Activated naive CD4-positive, alpha-beta T cell treated with anti-CD3 and anti-CD28 coated beads for 36 hours (primary cell): ENCODE measurements at regions of chr4 and their contacts with region 1.

Region 1: GRCh38 chr4:67545199-67546003 is at the start of gene CENPC:
- DNase-seq: peak; percentile 97
- H3K4me3 Mint-ChIP-seq: peak within 1 kb of the TSS; percentile 96
- H3K27ac Mint-ChIP-seq: peak within 1 kb of the TSS; percentile 99
- H3K4me1 Mint-ChIP-seq: peaks cover 38% of the 10 kb centered on the region
- H3K27me3 Mint-ChIP-seq: no peaks in the 10 kb centered on the region
- total RNA-seq, gene CENPC: 46.0 to 51.7 TPM

Region 2: GRCh38 chr4:67393699-67394281 is 151.6 kb before region 1 on chr4:
- CTCF ChIA-PET with region 1: no interaction called
- intact Hi-C with region 1: no loop called
- DNase-seq: peak; percentile 21
- H3K4me3 Mint-ChIP-seq: no peak overlapping the region
- H3K27ac Mint-ChIP-seq: no peak overlapping the region
- H3K4me1 Mint-ChIP-seq: no peaks in the 10 kb centered on the region
- H3K27me3 Mint-ChIP-seq: peaks cover 5% of the 10 kb centered on the region

Region 3: DNA sequence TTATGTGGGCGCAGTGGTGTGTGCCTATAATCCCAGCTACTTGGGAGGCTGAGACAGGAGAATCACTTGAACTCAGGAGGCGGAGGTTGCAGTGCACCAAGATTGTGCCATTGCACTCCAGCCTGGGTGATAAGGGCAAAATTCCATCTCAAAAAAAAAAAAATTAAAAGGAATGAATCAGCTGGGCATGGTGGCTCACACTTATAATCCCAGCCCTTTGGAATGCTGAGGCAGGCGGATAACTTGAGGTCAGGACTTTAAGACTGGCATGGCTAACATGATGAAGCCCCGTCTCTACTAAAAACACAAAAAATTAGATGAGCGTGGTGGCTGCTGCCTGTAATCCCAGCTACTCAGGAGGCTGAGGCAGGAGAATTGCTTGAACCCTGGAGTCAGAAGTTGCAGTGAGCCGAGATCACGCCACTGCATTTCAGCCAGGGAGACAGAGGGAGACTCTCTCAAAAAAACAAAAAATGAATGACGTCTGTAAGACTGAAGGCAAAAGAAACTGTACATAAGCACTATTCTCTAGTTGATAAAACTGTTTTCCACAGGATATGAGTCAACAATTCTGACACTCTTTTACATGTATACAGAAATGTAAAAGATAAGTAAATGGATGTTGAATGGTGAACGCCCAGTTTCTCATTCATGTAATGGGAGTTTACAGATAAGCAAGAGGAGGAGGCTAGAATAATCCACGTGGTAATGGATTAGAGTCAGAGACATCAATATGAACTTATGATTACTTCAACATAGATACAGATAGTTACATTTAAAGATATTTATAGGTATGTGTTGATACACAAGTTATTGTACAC is 22.3 kb before region 1 on chr4:
- CTCF ChIA-PET with region 1: interaction called, 4 read pairs
- intact Hi-C with region 1: loop called (anchors 1 kb)
- DNase-seq: no peak
- H3K4me3 Mint-ChIP-seq: peak overlapping the region; percentile 10
- H3K27ac Mint-ChIP-seq: peak overlapping the region; percentile 86
- H3K4me1 Mint-ChIP-seq: peaks cover 70% of the 10 kb centered on the region
- H3K27me3 Mint-ChIP-seq: no peaks in the 10 kb centered on the region

Region 4: DNA sequence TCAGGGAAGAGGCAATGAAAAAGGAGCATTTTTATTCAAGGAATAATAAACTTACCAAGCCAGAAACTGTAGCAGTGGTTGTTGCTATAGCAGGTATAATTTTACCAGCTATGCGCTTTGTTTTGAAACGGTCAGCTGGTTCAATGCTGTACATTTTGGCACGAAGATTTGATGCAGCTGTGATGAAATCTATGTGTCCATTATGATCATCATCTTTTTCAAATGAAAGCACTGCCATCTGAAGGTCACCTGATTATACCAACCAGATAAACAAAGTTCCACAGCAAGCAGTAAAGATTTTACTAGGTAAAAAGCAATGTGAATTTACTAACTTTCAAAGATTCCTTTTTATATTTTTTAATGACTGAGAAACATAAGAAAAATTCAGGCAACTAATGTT is 79.5 kb after region 1 on chr4:
- CTCF ChIA-PET with region 1: interaction called, 3 read pairs
- intact Hi-C with region 1: loop called (anchors 2 kb)
- DNase-seq: no peak
- H3K4me3 Mint-ChIP-seq: no peak overlapping the region
- H3K27ac Mint-ChIP-seq: no peak overlapping the region
- H3K4me1 Mint-ChIP-seq: no peaks in the 10 kb centered on the region
- H3K27me3 Mint-ChIP-seq: no peaks in the 10 kb centered on the region

Region 5: GRCh38 chr4:67909905-67910584 is 364.6 kb after region 1 on chr4:
- CTCF ChIA-PET with region 1: interaction called, 7 read pairs
- intact Hi-C with region 1: loop called (anchors 1 kb)
- DNase-seq: no peak
- H3K4me3 Mint-ChIP-seq: no peak overlapping the region
- H3K27ac Mint-ChIP-seq: no peak overlapping the region
- H3K4me1 Mint-ChIP-seq: no peaks in the 10 kb centered on the region
- H3K27me3 Mint-ChIP-seq: peaks cover 2% of the 10 kb centered on the region

Region 6: DNA sequence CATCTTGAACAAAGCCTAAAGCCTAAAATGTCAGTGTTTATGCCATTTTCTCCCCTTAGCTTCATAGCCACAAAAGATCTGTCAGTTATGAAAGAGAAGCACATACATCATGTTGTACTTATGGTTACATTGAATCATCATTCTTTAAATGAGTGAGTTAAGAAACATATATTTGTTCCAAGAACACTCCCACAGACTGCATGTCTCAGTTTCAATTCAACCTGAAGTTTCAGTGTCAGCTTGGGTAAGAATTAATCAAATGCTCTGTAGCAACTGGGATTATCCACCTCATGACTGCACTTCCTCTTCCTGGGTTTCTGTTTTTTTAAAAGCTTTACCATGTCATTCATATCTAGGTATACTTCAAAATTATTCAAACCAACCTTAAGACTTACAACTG is 704.0 kb after region 1 on chr4:
- CTCF ChIA-PET with region 1: no interaction called
- intact Hi-C with region 1: loop called (anchors 1 kb)
- DNase-seq: peak; percentile 25
- H3K4me3 Mint-ChIP-seq: no peak overlapping the region
- H3K27ac Mint-ChIP-seq: peak overlapping the region; percentile 88
- H3K4me1 Mint-ChIP-seq: peaks cover 16% of the 10 kb centered on the region
- H3K27me3 Mint-ChIP-seq: peaks cover 7% of the 10 kb centered on the region

Region 7: GRCh38 chr4:68447201-68447600 is 901.8 kb after region 1 on chr4 and contains the start of gene TMPRSS11E:
- CTCF ChIA-PET with region 1: no interaction called
- intact Hi-C with region 1: loop called (anchors 10 kb)
- DNase-seq: no peak
- H3K4me3 Mint-ChIP-seq: no peak within 1 kb of the TSS
- H3K27ac Mint-ChIP-seq: no peak within 1 kb of the TSS
- H3K4me1 Mint-ChIP-seq: peaks cover 26% of the 10 kb centered on the region
- H3K27me3 Mint-ChIP-seq: no peaks in the 10 kb centered on the region
- total RNA-seq, gene TMPRSS11E: not detected